ENCODE measurements at regions of chr11 and their contacts with region 1.

Region 1: GRCh38 chr11:47324520-47324919 is 28.0 kb downstream of the MYBPC3 start:
- DNase-seq: peak; percentile 68

Region 2: DNA sequence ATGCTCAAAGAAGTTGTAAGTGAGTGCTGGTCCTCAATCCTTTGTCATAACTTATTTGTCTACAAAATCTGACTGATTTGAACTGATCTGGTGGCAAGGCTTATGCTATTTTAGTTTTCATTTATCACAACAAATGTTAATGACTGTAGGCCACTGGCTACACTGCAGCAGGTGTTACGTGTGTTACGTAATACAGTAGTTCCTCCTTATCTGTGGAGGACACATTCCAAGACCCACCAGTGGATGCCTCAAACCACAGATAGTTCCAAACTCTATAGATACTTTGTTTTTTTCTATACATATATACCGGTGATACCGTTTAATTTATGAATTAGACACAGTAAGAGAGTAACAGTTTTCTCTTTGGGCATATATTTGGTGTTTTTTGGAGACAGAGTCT is 47.6 kb before region 1 on chr11:
- intact Hi-C with region 1: loop called (anchors 5 kb)
- DNase-seq: no peak

Region 3: DNA sequence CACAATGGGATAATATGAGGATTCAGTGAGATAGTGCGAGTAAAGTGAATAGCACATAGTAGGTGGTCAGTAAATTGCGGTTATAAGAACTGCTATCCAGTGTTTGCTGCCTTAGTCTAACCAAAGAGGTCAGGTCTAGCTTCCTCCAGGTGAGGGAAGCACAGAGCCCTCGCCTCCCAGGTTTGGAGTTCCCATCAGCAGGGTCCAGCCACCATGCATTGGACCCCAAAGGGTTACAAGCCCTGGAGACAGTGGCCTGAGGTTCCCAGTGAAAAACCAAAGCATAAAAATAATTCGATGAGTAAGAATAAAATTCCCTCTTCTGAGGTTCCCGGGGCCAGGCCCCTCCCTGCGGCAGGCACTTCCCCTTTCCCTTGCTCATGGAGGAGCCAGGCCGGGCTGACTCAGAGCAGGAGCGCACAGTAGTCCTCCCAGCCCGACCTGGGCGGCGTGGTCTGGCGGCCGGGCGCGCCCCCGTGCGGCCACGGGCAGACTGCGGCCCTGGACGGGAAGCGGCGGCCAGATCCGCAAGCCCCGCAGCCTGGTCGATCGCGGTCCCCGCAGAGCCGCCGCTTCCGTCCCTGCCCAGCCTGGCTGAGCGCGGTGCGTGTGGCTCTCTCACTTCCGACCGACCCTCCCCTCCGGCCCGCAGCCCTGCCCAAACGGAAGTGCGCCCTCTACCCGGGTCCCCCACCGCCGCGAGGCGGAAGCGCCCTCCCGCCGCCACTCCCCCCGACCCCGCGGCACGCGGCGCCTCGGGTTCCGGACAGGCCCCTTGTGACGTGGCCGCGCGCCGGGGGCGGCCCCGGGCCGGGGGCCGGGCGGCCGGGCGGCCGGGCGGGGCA is 83.4 kb after region 1 on chr11 and contains the start of gene SLC39A13:
- intact Hi-C with region 1: no loop called
- DNase-seq: peak; percentile 98
- total RNA-seq, gene SLC39A13: 72.2 TPM